AG04449 (cell line): ENCODE measurements at regions of chr12 and their contacts with region 1.

Region 1: GRCh38 chr12:102484428-102484958 is 4.1 kb upstream of the IGF1 start:
- DNase-seq: no peak
- H3K4me3 ChIP-seq: no peak overlapping the region
- CTCF ChIP-seq: peak; percentile 69

Region 2: DNA sequence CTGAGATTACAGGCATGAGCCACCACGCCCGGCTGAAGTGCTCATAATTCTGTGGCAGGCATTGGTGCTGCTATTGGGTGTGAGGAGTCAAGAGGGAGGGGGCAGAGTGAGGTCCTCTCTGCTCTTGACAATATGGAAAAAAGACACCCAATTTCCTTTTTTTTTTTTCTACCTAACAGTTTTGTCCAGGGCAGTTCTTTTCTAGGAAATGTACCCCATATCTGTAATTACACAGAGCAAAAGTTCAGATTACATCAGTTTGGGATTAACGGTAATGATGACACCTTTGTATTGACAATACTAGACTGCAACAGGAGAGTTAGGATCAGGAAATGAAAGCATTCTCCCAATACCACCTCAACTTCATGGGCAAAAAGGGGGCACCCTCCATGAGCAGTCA is 40.4 kb before region 1 on chr12:
- CTCF ChIA-PET with region 1: no interaction called
- POLR2A ChIA-PET with region 1: no interaction called
- DNase-seq: no peak
- H3K4me3 ChIP-seq: no peak overlapping the region
- CTCF ChIP-seq: no peak

Region 3: DNA sequence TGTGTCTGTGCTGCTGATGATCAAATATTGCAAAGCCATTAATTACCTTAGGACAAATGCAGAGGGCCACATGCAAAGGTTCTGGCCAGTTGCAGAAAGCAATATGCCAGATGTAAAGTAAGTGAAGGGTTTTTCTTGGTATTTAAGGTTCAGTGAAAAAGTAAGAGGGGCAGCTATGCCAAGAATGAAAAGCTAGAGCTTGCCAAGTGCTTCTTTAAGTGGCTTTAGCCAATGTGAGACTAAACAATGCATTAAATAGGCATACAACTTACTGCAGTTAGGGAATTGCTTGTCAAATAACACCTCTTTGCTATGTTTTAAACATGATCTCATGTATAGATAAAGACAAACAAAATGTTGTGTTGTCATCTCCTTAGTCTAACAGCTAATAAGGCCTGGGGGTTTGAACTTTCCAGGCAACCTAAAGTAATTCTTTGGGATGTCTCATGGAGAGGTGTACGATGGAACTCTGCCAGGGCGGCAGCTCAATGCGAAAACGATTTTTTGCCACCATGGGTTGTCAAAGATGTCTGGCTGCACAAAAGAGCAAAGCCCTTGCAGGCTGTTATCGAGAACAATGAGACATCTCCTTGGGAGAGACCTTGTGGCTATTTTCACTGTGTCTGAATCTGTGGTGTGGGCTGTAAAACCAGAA is 16.1 kb before region 1 on chr12:
- CTCF ChIA-PET with region 1: interaction called, 44 read pairs
- POLR2A ChIA-PET with region 1: no interaction called
- DNase-seq: no peak
- H3K4me3 ChIP-seq: no peak overlapping the region
- CTCF ChIP-seq: no peak

Region 4: GRCh38 chr12:102527171-102527720 is 42.8 kb after region 1 on chr12:
- CTCF ChIA-PET with region 1: interaction called, 15 read pairs
- POLR2A ChIA-PET with region 1: no interaction called
- DNase-seq: peak; percentile 31
- H3K4me3 ChIP-seq: no peak overlapping the region
- CTCF ChIP-seq: no peak

Region 5: GRCh38 chr12:102740141-102740955 is 255.9 kb after region 1 on chr12:
- CTCF ChIA-PET with region 1: interaction called, 35 read pairs
- POLR2A ChIA-PET with region 1: no interaction called
- DNase-seq: peak; percentile 16
- H3K4me3 ChIP-seq: no peak overlapping the region
- CTCF ChIP-seq: peak; percentile 7